Natural killer cell (primary cell): ENCODE measurements at regions of chr5 and their contacts with region 1.

Region 1: DNA sequence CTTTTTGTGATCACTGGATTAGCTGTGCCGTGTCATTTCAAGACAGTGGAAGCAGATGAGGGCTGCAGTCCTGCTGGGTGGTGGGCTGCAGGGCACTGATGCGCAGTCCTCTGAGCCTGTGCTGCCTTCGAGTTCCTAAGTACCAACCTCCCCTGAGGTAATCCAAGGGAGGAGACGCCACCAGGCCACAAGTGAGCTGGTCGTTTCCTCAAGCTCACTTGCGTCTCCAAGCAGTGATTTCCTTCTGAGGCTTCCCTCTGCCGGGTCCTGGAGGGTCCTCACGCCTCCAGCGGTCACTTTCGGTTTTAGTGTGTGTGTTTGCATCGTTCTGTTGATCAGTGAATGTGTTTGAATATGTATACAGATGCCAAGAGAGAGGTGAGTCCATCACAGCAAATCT is 115.7 kb downstream of the TRIO start:
- DNase-seq: peak in 1 of 2 donors; percentile 9
- ATAC-seq: no peak
- H3K4me3 ChIP-seq: no peak overlapping the region
- H3K4me3 Mint-ChIP-seq: peak overlapping the region; percentile 65
- H3K27ac ChIP-seq: no peak overlapping the region
- H3K27ac Mint-ChIP-seq: peak overlapping the region in 1 of 2 donors; percentile 76
- H3K4me1 ChIP-seq: peaks cover 50% of the 10 kb centered on the region
- H3K4me1 Mint-ChIP-seq: peaks cover 54 to 61% of the 10 kb centered on the region in 2 donors
- H3K27me3 ChIP-seq: no peaks in the 10 kb centered on the region
- H3K27me3 Mint-ChIP-seq: no peaks in the 10 kb centered on the region
- CTCF ChIP-seq: no peak

Region 2: GRCh38 chr5:13930541-13931172 is 328.2 kb before region 1 on chr5:
- intact Hi-C with region 1: no loop called
- DNase-seq: no peak
- ATAC-seq: no peak
- H3K4me3 ChIP-seq: no peak overlapping the region
- H3K4me3 Mint-ChIP-seq: no peak overlapping the region
- H3K27ac ChIP-seq: no peak overlapping the region
- H3K27ac Mint-ChIP-seq: no peak overlapping the region
- H3K4me1 ChIP-seq: no peaks in the 10 kb centered on the region
- H3K4me1 Mint-ChIP-seq: no peaks in the 10 kb centered on the region
- H3K27me3 ChIP-seq: no peaks in the 10 kb centered on the region
- H3K27me3 Mint-ChIP-seq: peaks cover 0 to 2% of the 10 kb centered on the region in 2 donors
- CTCF ChIP-seq: no peak

Region 3: GRCh38 chr5:14223372-14223771 is 35.5 kb before region 1 on chr5:
- intact Hi-C with region 1: loop called (anchors 5 kb)
- DNase-seq: peak in 1 of 2 donors; percentile 12
- ATAC-seq: peak; percentile 41 to 59 (median 50)
- H3K4me3 ChIP-seq: no peak overlapping the region
- H3K4me3 Mint-ChIP-seq: peak overlapping the region; percentile 71
- H3K27ac ChIP-seq: peak overlapping the region; percentile 15
- H3K27ac Mint-ChIP-seq: peak overlapping the region; percentile 71 to 80
- H3K4me1 ChIP-seq: peaks cover 17% of the 10 kb centered on the region
- H3K4me1 Mint-ChIP-seq: peaks cover 43 to 76% of the 10 kb centered on the region in 2 donors
- H3K27me3 ChIP-seq: no peaks in the 10 kb centered on the region
- H3K27me3 Mint-ChIP-seq: no peaks in the 10 kb centered on the region
- CTCF ChIP-seq: no peak